ENCODE measurements at regions of chr11 and their contacts with region 1.

Region 1: GRCh38 chr11:77187776-77188632 is 60.0 kb downstream of the MYO7A start:
- DNase-seq: peak; percentile 72 to 89 (median 81)
- ATAC-seq: peak; percentile 75 to 90 (median 84)
- H3K4me3 ChIP-seq: no peak overlapping the region
- H3K27ac ChIP-seq: no peak overlapping the region
- H3K4me1 ChIP-seq: no peaks in the 10 kb centered on the region
- H3K27me3 ChIP-seq: no peaks in the 10 kb centered on the region
- CTCF ChIP-seq: peak; percentile 79 to 93 (median 90)
- POLR2A ChIP-seq: no peak

Region 2: DNA sequence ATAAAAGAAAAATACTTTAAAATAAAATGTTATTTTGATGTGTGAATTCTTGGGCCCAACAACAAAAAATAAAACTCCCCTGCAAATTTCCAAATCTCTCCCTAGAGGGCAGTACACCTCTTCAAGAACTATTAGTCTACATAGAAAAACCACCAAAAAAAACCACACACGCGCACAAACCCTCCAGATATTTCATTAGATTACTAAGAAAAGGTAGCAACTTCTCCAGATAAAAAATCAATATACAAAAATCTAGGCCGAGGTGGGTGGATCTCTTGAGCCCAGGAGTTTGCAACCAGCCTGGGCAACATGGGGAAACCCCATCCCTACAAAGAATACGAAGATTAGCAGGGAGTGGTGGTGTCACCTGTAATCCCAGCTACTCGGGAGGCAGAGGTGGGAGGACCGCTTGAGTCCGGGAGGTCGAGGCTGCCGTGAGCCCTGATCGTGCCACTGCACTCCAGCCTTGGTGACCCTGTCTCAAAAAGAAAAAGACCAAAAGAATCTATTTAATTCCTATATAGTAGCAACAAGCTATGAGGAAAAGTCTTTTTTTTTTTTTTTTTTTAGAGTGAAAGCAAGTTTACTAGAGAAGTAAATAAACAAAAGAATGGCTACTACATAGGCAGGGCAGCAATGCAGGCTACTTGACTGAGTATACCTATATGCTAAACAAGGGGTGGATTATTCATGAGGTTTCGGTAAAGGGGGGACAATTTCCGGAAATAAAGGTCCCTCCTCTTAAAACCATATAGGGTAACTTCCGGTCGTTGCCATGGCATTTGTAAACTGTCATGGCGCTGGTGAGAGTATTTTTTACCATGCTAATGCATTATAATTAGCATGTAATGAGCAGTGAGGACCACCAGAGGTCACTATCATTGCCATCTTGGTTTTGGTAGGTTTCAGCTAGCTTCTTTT is 140.7 kb before region 1 on chr11:
- intact Hi-C with region 1: loop called in 8 of 10 experiments (anchors 1 to 10 kb)
- DNase-seq: peak in 4 of 5 donors; percentile 64 to 84 (median 77)
- ATAC-seq: peak; percentile 81 to 95 (median 88)
- H3K4me3 ChIP-seq: peak overlapping the region in 9 of 12 donors; percentile 24 to 56 (median 38)
- H3K27ac ChIP-seq: peak overlapping the region in 3 of 12 donors; percentile 9 to 49 (median 17)
- H3K4me1 ChIP-seq: peaks cover 0 to 17% (median 4%) of the 10 kb centered on the region in 12 donors
- H3K27me3 ChIP-seq: peaks cover 5 to 35% (median 18%) of the 10 kb centered on the region in 9 donors
- CTCF ChIP-seq: peak; percentile 62 to 81 (median 72)
- POLR2A ChIP-seq: no peak

Region 3: GRCh38 chr11:77127232-77127911 is 60.6 kb before region 1 on chr11:
- intact Hi-C with region 1: loop called (anchors 1 to 2 kb)
- DNase-seq: peak; percentile 44 to 76 (median 63)
- ATAC-seq: peak; percentile 55 to 71 (median 66)
- H3K4me3 ChIP-seq: peak overlapping the region; percentile 1 to 60 (median 45)
- H3K27ac ChIP-seq: peak overlapping the region in 3 of 12 donors; percentile 9 to 35 (median 25)
- H3K4me1 ChIP-seq: peaks cover 0 to 41% (median 26%) of the 10 kb centered on the region in 12 donors
- H3K27me3 ChIP-seq: peaks cover 0 to 9% (median 0%) of the 10 kb centered on the region in 9 donors
- CTCF ChIP-seq: peak; percentile 96 to 100 (median 99)
- POLR2A ChIP-seq: no peak

Region 4: GRCh38 chr11:77547863-77548551 is 360.0 kb after region 1 on chr11:
- intact Hi-C with region 1: loop called in 2 of 10 experiments (anchors 5 kb)
- DNase-seq: peak in 2 of 5 donors; percentile 23 to 26
- ATAC-seq: peak in 3 of 4 donors; percentile 30 to 66 (median 39)
- H3K4me3 ChIP-seq: no peak overlapping the region
- H3K27ac ChIP-seq: no peak overlapping the region
- H3K4me1 ChIP-seq: peaks cover 0 to 9% (median 0%) of the 10 kb centered on the region in 12 donors
- H3K27me3 ChIP-seq: no peaks in the 10 kb centered on the region
- CTCF ChIP-seq: peak; percentile 42 to 75 (median 58)
- POLR2A ChIP-seq: no peak

Region 5: DNA sequence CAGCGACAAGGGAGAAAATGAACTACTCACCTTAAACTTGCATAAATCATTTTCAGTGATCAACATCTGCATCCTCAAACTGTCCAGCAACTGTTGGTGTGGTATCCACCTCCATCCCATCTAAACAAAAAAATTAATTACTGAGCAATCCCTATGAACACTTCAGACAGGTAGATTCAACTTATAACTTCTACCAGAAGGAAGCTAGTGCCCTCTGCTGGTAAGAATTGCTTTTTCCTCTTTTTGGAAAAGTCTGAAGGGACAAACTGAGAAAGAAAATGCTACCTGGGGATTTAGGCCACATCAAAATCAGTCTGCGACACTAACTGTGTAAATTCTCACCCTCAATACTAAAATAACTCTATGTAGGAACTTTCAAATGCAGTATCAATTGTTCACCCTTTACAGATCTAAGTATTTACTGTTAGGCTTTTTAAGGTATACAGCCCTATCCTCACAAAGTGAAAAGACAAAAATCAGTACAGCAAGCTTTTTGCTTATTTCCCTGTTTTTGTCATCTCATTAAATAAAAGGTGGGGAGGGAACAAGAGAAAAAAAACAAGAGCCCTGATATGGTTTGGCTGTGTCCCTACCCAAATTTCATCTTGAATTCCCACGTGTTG is 431.7 kb after region 1 on chr11:
- intact Hi-C with region 1: loop called in 3 of 10 experiments (anchors 5 to 10 kb)
- DNase-seq: no peak
- ATAC-seq: no peak
- H3K4me3 ChIP-seq: no peak overlapping the region
- H3K27ac ChIP-seq: no peak overlapping the region
- H3K4me1 ChIP-seq: no peaks in the 10 kb centered on the region
- H3K27me3 ChIP-seq: no peaks in the 10 kb centered on the region
- CTCF ChIP-seq: peak; percentile 40 to 76 (median 64)
- POLR2A ChIP-seq: no peak